ENCODE measurements at regions of chr1 and their contacts with region 1.

Region 1: GRCh38 chr1:116674011-116674531 is 6.5 kb upstream of the IGSF3 start:
- DNase-seq: no peak
- ATAC-seq: no peak
- H3K4me3 ChIP-seq: no peak overlapping the region
- H3K27ac ChIP-seq: no peak overlapping the region
- H3K4me1 ChIP-seq: no peaks in the 10 kb centered on the region
- H3K27me3 ChIP-seq: no peaks in the 10 kb centered on the region
- CTCF ChIP-seq: no peak
- EP300 ChIP-seq: no peak
- POLR2A ChIP-seq: no peak
- RAD21 ChIP-seq: no peak

Region 2: DNA sequence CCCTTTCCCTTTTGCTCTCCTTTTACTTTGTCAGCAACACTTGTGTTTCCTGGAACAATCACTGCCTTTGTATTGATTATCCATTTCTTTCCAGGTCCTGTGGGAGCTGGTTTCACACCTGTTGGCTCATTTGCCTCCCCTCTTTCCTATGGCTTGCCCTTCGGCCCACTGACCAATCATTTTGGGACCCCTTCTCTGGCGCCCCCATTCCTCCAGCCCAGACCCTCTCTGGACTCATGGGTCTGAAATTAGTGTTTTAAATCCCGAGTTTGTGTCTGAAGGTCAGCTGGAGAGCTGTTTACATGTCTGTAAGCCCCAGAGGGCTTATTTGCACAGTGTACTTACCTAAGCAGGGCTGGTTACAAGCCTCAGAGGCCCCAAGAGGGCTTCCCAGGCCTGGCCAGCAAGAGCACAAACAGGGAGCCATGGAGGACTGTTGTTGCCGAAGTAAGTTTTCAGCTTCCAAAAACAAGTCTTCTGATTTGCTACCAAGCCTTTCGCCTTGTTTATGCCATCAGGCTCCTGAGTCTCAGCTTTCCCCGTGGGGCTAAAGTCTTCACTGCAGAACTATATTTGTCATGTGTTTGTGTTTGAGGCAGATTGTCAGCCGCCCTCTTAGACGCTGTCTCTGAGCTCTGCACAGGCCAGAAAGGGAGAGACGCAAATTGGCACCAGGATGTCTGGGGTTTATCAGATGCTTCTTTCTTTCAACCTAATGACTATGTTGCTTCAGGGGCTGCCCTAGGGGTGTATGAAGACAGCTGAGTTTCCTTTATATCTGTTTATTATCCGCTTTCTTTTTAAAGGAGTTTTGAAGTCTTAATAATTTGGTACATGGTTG is 208.0 kb before region 1 on chr1:
- CTCF ChIA-PET with region 1: no interaction called
- POLR2A ChIA-PET with region 1: no interaction called
- RAD21 ChIA-PET with region 1: no interaction called
- SMC1A ChIA-PET with region 1: no interaction called
- in situ Hi-C with region 1: no loop called
- intact Hi-C with region 1: no loop called
- DNase-seq: no peak
- ATAC-seq: no peak
- H3K4me3 ChIP-seq: no peak overlapping the region
- H3K27ac ChIP-seq: no peak overlapping the region
- H3K4me1 ChIP-seq: no peaks in the 10 kb centered on the region
- H3K27me3 ChIP-seq: no peaks in the 10 kb centered on the region
- CTCF ChIP-seq: no peak
- EP300 ChIP-seq: no peak
- POLR2A ChIP-seq: no peak
- RAD21 ChIP-seq: no peak

Region 3: GRCh38 chr1:116580446-116581322 is 93.4 kb before region 1 on chr1:
- CTCF ChIA-PET with region 1: interaction called, 27 read pairs
- POLR2A ChIA-PET with region 1: interaction called, 3 read pairs
- RAD21 ChIA-PET with region 1: interaction called, 8 read pairs
- SMC1A ChIA-PET with region 1: interaction called, 67 read pairs
- in situ Hi-C with region 1: loop called (anchors 5 kb)
- intact Hi-C with region 1: no loop called
- DNase-seq: no peak
- ATAC-seq: no peak
- H3K4me3 ChIP-seq: no peak overlapping the region
- H3K27ac ChIP-seq: no peak overlapping the region
- H3K4me1 ChIP-seq: peaks cover 2% of the 10 kb centered on the region
- H3K27me3 ChIP-seq: no peaks in the 10 kb centered on the region
- CTCF ChIP-seq: no peak
- EP300 ChIP-seq: no peak
- POLR2A ChIP-seq: no peak
- RAD21 ChIP-seq: no peak

Region 4: DNA sequence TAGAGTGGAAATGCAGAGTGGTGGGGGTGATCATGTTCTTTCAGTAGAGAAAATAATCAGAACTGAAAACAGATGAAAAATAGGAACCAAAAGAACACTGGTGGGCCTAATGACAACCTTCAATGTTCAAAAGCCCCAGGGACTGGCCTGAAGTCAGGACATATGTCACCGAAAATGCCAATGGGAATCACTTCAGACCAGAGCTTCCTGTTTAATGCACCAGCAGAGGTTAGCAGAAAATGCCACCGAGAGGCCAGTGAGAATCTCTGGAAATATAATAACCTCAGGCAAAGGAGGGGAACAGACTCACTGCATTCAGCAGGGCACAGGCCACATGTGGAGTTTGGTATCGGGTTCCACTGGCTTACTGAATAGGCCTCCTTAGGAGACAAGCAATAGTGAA is 87.3 kb before region 1 on chr1:
- CTCF ChIA-PET with region 1: interaction called, 24 read pairs
- POLR2A ChIA-PET with region 1: interaction called, 3 read pairs
- RAD21 ChIA-PET with region 1: interaction called, 4 read pairs
- SMC1A ChIA-PET with region 1: interaction called, 7 read pairs
- in situ Hi-C with region 1: no loop called
- intact Hi-C with region 1: no loop called
- DNase-seq: no peak
- ATAC-seq: peak; percentile 84
- H3K4me3 ChIP-seq: no peak overlapping the region
- H3K27ac ChIP-seq: peak overlapping the region; percentile 66
- H3K4me1 ChIP-seq: peaks cover 21% of the 10 kb centered on the region
- H3K27me3 ChIP-seq: no peaks in the 10 kb centered on the region
- CTCF ChIP-seq: no peak
- EP300 ChIP-seq: peak; percentile 69 to 73; a peak in 2 of 4 replicates
- POLR2A ChIP-seq: no peak
- RAD21 ChIP-seq: no peak

Region 5: GRCh38 chr1:116628448-116628847 is 45.6 kb before region 1 on chr1:
- CTCF ChIA-PET with region 1: interaction called, 13 read pairs
- POLR2A ChIA-PET with region 1: interaction called, 4 read pairs
- RAD21 ChIA-PET with region 1: interaction called, 4 read pairs
- SMC1A ChIA-PET with region 1: interaction called, 9 read pairs
- in situ Hi-C with region 1: no loop called
- intact Hi-C with region 1: no loop called
- DNase-seq: peak; percentile 48
- ATAC-seq: no peak; the same call in 2 of the 3 replicates
- H3K4me3 ChIP-seq: no peak overlapping the region
- H3K27ac ChIP-seq: peak overlapping the region; percentile 68
- H3K4me1 ChIP-seq: peaks cover 21% of the 10 kb centered on the region
- H3K27me3 ChIP-seq: no peaks in the 10 kb centered on the region
- CTCF ChIP-seq: no peak
- EP300 ChIP-seq: 0 out of 4 replicates have a peak, but pooled peaks of 1 of the 2 experiments have one; percentile 62
- POLR2A ChIP-seq: peak; percentile 36; the same call in 1 of the 2 replicates
- RAD21 ChIP-seq: 0 out of 2 replicates have a peak, but pooled peaks have one; percentile 0

Region 6: GRCh38 chr1:116661633-116662032 is 12.4 kb before region 1 on chr1:
- CTCF ChIA-PET with region 1: interaction called, 54 read pairs
- POLR2A ChIA-PET with region 1: interaction called, 3 read pairs
- RAD21 ChIA-PET with region 1: interaction called, 6 read pairs
- SMC1A ChIA-PET with region 1: interaction called, 4 read pairs
- in situ Hi-C with region 1: no loop called
- intact Hi-C with region 1: no loop called
- DNase-seq: no peak
- ATAC-seq: no peak
- H3K4me3 ChIP-seq: no peak overlapping the region
- H3K27ac ChIP-seq: no peak overlapping the region
- H3K4me1 ChIP-seq: no peaks in the 10 kb centered on the region
- H3K27me3 ChIP-seq: peaks cover 0 to 12% of the 10 kb centered on the region in 2 experiments; a peak in 2 of 4 replicates
- CTCF ChIP-seq: no peak
- EP300 ChIP-seq: no peak
- POLR2A ChIP-seq: no peak
- RAD21 ChIP-seq: no peak

Region 7: DNA sequence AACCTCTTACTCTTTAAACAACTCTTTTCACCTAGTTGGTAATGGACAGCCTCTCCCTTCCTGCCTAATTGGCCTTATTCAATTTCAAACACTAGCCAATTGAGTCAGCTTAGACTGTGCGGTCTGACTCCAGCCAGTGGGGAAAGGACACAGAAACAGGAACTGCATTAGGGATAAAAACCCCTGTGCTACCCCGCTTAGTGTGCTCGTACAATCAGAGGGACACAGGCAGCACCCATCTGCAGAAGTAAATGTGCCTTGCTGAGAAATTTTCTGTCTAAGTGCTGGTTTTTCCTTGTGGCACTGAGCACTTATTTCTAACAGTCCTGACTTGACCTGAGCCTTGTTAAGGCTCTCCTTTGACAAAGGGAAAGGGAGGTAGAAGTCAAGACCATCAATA is 74.2 kb after region 1 on chr1:
- CTCF ChIA-PET with region 1: no interaction called
- POLR2A ChIA-PET with region 1: no interaction called
- RAD21 ChIA-PET with region 1: no interaction called
- SMC1A ChIA-PET with region 1: no interaction called
- in situ Hi-C with region 1: no loop called
- intact Hi-C with region 1: no loop called
- DNase-seq: no peak
- ATAC-seq: no peak
- H3K4me3 ChIP-seq: no peak overlapping the region
- H3K27ac ChIP-seq: no peak overlapping the region
- H3K4me1 ChIP-seq: no peaks in the 10 kb centered on the region
- H3K27me3 ChIP-seq: no peaks in the 10 kb centered on the region
- CTCF ChIP-seq: no peak
- EP300 ChIP-seq: no peak
- POLR2A ChIP-seq: no peak
- RAD21 ChIP-seq: no peak

Measured in GM12878 (cell line).